Activated naive CD4-positive, alpha-beta T cell treated with anti-CD3 and anti-CD28 coated beads, Interleukin-2, amount 10 ng/mL, durations not matched to agents 7 days and 5 days (primary cell): ENCODE measurements at regions of chr5 and their contacts with region 1.

Region 1: DNA sequence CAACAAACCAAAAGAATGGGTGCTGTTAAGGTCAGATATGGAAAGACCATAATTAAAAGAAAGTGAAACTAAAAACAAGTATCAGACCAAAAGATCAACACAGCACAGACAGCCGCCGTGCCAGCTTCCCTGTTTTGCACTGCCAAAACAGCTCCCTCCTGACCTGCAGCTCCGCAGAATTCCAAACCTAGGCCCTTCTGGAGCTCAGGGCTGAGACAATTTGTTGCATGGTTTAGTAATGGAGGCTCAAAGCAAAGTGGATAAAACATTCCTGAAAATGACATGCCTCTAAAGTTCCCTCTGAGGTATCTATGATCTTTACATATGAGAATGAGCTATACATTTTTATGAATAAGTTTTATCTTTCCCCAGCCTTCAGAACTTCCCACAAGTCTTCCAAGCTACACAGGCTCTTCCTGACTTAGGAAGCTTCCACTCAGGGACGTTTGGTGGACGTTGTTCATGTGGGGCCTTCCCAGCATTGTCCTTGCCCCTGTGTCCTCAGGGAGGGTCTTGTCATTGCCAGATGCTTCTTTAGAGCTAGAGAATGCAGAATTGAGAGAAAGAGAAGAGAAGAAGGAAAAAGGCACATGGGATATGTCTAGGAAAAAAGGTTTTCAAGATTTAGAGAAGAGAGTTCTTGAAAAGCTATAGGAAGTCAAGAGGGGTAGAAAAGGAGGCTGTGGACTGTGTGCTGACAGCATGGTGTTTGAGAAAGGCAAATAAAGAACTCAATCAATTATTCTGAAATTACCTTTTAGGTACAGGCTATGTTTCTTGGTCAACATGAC is 28.4 kb upstream of the SSBP2 start:
- DNase-seq: peak; percentile 58
- H3K4me3 Mint-ChIP-seq: peak overlapping the region; percentile 68
- H3K27ac Mint-ChIP-seq: peak overlapping the region; percentile 85
- H3K4me1 Mint-ChIP-seq: peaks cover 22% of the 10 kb centered on the region
- H3K27me3 Mint-ChIP-seq: peaks cover 7% of the 10 kb centered on the region

Region 2: GRCh38 chr5:81838307-81838906 is 59.1 kb after region 1 on chr5:
- CTCF ChIA-PET with region 1: interaction called, 12 read pairs
- DNase-seq: peak; percentile 49
- H3K4me3 Mint-ChIP-seq: no peak overlapping the region
- H3K27ac Mint-ChIP-seq: no peak overlapping the region
- H3K4me1 Mint-ChIP-seq: no peaks in the 10 kb centered on the region
- H3K27me3 Mint-ChIP-seq: peaks cover 4% of the 10 kb centered on the region

Region 3: DNA sequence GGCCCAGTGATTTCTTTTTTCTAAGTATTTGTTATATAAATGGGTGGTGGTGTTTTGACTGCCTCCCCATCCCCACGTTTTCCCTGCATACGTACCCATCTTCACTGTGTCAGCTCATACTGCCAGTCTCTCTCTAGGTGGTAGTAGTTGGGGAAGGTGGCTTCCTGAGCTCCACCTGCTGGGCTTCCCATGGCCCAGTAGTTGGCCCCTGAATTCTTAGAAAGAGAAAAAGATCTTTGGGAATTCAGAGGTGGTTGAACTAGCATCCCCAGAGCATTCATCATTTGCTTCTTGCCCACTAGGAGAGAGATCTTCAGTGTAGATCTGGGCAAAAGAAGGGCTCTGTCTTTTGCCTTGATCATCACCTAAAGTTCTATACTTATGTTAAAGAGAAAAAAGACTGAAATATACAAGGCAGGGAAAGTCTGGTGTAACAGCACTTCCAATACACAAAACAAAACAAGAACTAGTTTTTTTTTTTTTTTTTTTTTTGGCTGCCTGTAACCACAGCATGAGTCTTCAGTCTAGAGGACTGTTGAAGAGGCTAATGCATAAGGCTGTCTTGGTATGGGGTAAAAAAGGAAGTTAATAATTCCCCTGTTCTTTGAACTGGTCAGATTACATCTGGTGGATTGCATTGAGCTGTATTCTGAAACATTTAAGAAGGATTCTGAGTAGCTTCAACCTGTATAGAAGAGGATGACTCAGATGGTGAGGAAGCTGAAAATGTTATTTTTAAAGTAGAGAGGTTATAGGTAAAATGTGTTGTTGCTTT is 321.2 kb after region 1 on chr5:
- CTCF ChIA-PET with region 1: no interaction called
- DNase-seq: no peak
- H3K4me3 Mint-ChIP-seq: no peak overlapping the region
- H3K27ac Mint-ChIP-seq: no peak overlapping the region
- H3K4me1 Mint-ChIP-seq: peaks cover 8% of the 10 kb centered on the region
- H3K27me3 Mint-ChIP-seq: no peaks in the 10 kb centered on the region